B cell (primary cell): ENCODE measurements at regions of chr19 and their contacts with region 1.

Region 1: DNA sequence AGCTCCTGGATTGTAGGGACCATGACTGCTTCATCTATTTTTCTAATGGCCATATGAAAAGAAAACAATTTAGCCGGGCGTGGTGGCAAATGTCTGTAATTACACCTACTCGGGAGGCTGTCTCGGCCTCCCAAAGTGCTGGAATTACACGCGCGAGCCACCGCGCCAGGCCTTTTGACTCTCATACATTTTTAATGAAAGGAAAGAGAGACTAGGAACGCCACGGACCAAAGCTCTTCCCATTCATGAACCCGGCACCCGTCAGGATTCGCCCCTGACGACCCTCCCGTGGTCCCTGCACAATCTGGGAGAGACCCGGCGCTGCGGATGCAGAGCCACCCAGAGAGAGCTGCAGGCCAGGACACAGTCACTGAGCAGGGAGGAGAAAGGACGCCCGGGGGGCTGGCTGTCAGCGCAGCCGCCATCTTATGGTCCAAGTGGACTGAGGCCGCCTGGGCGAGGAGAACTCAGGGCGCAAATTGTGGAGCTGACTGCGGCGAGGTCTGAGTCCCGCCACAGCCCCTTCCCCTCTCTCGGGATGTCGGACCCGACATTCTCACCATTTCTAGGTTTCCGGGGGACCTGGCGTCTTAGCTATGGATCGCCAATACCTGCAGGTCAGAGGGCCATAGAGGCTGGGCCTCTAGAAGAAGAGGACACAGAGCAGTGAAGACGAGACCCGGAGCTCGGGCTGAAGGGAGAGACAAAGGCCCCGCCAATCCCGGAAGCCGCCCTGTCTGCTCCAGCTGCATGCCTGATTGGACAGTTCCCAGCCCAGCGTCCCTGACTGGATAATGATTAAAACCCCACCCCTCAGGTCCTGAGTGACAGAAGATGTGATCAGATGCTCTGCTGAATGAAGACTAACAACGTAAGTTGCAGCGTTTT is at the start of gene ZNF681:
- DNase-seq: peak; percentile 87
- ATAC-seq: peak; percentile 83
- H3K4me3 ChIP-seq: peak within 1 kb of the TSS; percentile 77 to 99 (median 88)
- H3K4me3 Mint-ChIP-seq: peak within 1 kb of the TSS; percentile 97
- H3K27ac ChIP-seq: peak within 1 kb of the TSS; percentile 85 to 93
- H3K27ac Mint-ChIP-seq: peak within 1 kb of the TSS; percentile 94
- H3K4me1 ChIP-seq: peaks cover 3 to 22% of the 10 kb centered on the region in 2 donors
- H3K4me1 Mint-ChIP-seq: peaks cover 27% of the 10 kb centered on the region
- H3K27me3 ChIP-seq: no peaks in the 10 kb centered on the region
- H3K27me3 Mint-ChIP-seq: no peaks in the 10 kb centered on the region
- CTCF ChIP-seq: peak; percentile 47
- total RNA-seq, gene ZNF681: 6.2 and 8.5 TPM in 2 replicates

Region 2: GRCh38 chr19:21767065-21767800 is 1991.2 kb before region 1 on chr19 and contains the start of gene ZNF100:
- CTCF ChIA-PET with region 1: no interaction called
- POLR2A ChIA-PET with region 1: no interaction called
- intact Hi-C with region 1: loop called (anchors 10 kb)
- DNase-seq: peak; percentile 89
- ATAC-seq: peak; percentile 97
- H3K4me3 ChIP-seq: peak within 1 kb of the TSS; percentile 77 to 91 (median 79)
- H3K4me3 Mint-ChIP-seq: peak within 1 kb of the TSS; percentile 96
- H3K27ac ChIP-seq: peak within 1 kb of the TSS; percentile 82 to 90
- H3K27ac Mint-ChIP-seq: peak within 1 kb of the TSS; percentile 90
- H3K4me1 ChIP-seq: peaks cover 9 to 10% of the 10 kb centered on the region in 2 donors
- H3K4me1 Mint-ChIP-seq: peaks cover 17% of the 10 kb centered on the region
- H3K27me3 ChIP-seq: no peaks in the 10 kb centered on the region
- H3K27me3 Mint-ChIP-seq: no peaks in the 10 kb centered on the region
- CTCF ChIP-seq: no peak
- total RNA-seq, gene ZNF100: 16.0 and 21.6 TPM in 2 replicates

Region 3: DNA sequence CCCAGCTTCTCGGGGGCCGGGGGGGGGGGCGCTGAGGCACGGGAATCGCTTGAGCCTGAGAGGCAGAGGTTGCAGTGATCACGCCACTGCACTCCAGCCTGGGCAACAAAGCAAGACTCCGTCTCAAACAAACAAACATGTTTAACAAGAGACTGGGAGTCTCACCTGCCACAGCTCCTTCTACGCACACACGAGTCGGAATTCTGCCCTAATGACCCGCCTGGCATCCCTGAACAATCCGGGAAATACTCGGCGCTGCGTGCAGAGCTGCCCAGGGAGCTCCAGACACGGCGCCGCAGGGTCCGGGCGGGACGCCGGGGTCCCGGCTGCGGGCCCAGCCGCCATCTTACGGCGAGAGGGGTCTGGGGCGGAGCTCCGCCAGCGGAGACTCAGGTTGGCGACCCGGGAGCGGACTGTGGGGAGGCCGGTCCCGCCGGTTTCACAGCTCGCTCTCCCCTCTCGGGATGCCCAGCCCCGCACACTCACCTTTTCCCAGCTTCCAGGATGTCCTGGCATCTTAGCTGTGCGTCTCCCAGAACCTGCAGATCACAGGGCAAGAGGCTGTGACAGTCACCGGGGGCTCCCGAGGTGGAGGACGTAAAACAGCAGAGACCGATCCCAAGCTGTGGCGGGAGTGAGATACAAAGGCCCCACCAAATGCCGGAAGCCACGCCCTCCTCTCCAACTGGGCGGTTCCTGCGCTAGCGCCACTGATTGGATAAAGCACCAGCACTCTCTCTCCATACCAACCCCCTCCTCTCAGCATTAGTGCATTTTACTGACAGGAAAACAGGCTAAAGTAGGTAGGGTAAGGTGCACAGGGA is 484.6 kb before region 1 on chr19:
- CTCF ChIA-PET with region 1: no interaction called
- POLR2A ChIA-PET with region 1: no interaction called
- intact Hi-C with region 1: loop called (anchors 2 kb)
- DNase-seq: peak; percentile 91
- ATAC-seq: peak; percentile 99
- H3K4me3 ChIP-seq: peak overlapping the region; percentile 81 to 99 (median 96)
- H3K4me3 Mint-ChIP-seq: peak overlapping the region; percentile 98
- H3K27ac ChIP-seq: peak overlapping the region; percentile 85 to 89
- H3K27ac Mint-ChIP-seq: peak overlapping the region; percentile 97
- H3K4me1 ChIP-seq: peaks cover 6 to 20% of the 10 kb centered on the region in 2 donors
- H3K4me1 Mint-ChIP-seq: peaks cover 30% of the 10 kb centered on the region
- H3K27me3 ChIP-seq: no peaks in the 10 kb centered on the region
- H3K27me3 Mint-ChIP-seq: no peaks in the 10 kb centered on the region
- CTCF ChIP-seq: no peak

Region 4: DNA sequence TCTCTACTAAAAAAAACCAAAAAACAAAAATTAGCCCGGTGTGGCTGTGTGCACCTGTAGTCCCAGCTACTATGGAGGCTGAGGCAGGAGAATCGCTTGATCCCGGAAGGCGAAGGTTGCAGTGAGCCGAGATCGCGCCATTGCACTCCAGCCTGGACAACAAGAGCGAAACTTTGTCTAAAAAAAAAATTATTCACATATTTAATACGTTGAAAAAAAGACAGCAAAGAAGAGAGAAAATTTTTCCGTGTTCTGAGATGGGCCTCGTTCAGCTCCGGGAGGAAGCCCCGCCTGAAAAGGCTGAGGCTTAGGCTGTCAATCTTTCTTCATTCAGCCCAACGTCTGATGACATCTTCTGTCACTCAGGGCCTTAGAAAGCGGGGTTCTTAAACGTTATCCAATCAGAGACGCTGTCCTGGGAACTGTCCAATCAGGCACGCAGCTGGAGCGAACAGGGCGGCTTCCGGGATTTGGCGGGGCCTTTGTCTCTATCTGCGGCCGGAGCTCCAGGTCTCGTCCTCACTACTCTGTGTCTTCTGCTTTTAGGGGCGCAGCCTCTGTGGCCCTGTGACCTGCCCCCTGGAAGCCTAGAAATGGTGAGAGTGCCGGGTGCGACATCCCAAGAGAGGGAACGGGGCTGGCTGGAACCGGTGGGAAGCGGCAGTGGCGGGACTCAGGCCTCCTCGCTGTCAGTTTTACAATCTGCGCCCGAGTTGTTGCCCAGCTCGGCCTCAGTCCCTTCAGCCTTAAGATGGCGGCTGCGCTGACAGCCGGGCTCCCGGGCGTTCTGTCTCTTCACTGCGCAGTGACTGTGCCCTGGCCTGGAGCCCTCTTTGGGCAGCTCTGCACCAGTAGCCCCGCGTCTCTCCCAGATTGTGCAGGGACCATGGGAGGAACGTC is 156.2 kb after region 1 on chr19 and contains the start of gene ZNF726:
- CTCF ChIA-PET with region 1: no interaction called
- POLR2A ChIA-PET with region 1: no interaction called
- intact Hi-C with region 1: loop called (anchors 1 kb)
- DNase-seq: peak; percentile 93
- ATAC-seq: peak; percentile 95
- H3K4me3 ChIP-seq: peak within 1 kb of the TSS; percentile 44 to 82 (median 69)
- H3K4me3 Mint-ChIP-seq: peak within 1 kb of the TSS; percentile 95
- H3K27ac ChIP-seq: peak within 1 kb of the TSS; percentile 54 to 78
- H3K27ac Mint-ChIP-seq: peak within 1 kb of the TSS; percentile 86
- H3K4me1 ChIP-seq: peaks cover 0 to 7% of the 10 kb centered on the region in 2 donors
- H3K4me1 Mint-ChIP-seq: peaks cover 11% of the 10 kb centered on the region
- H3K27me3 ChIP-seq: no peaks in the 10 kb centered on the region
- H3K27me3 Mint-ChIP-seq: no peaks in the 10 kb centered on the region
- CTCF ChIP-seq: no peak
- total RNA-seq, gene ZNF726: 5.6 and 8.3 TPM in 2 replicates

Region 5: GRCh38 chr19:24086974-24087595 is 328.7 kb after region 1 on chr19 and contains the start of gene ZNF254:
- CTCF ChIA-PET with region 1: interaction called, 3 read pairs
- POLR2A ChIA-PET with region 1: no interaction called
- intact Hi-C with region 1: loop called (anchors 2 kb)
- DNase-seq: peak; percentile 89
- ATAC-seq: peak; percentile 99
- H3K4me3 ChIP-seq: peak within 1 kb of the TSS; percentile 61 to 91 (median 74)
- H3K4me3 Mint-ChIP-seq: peak within 1 kb of the TSS; percentile 96
- H3K27ac ChIP-seq: peak within 1 kb of the TSS; percentile 84 to 89
- H3K27ac Mint-ChIP-seq: peak within 1 kb of the TSS; percentile 95
- H3K4me1 ChIP-seq: peaks cover 0 to 14% of the 10 kb centered on the region in 2 donors
- H3K4me1 Mint-ChIP-seq: peaks cover 15% of the 10 kb centered on the region
- H3K27me3 ChIP-seq: no peaks in the 10 kb centered on the region
- H3K27me3 Mint-ChIP-seq: no peaks in the 10 kb centered on the region
- CTCF ChIP-seq: no peak
- total RNA-seq, gene ZNF254: 25.2 and 28.8 TPM in 2 replicates